HEK293 (cell line): ENCODE measurements at regions of chr18 and their contacts with region 1.

Region 1: DNA sequence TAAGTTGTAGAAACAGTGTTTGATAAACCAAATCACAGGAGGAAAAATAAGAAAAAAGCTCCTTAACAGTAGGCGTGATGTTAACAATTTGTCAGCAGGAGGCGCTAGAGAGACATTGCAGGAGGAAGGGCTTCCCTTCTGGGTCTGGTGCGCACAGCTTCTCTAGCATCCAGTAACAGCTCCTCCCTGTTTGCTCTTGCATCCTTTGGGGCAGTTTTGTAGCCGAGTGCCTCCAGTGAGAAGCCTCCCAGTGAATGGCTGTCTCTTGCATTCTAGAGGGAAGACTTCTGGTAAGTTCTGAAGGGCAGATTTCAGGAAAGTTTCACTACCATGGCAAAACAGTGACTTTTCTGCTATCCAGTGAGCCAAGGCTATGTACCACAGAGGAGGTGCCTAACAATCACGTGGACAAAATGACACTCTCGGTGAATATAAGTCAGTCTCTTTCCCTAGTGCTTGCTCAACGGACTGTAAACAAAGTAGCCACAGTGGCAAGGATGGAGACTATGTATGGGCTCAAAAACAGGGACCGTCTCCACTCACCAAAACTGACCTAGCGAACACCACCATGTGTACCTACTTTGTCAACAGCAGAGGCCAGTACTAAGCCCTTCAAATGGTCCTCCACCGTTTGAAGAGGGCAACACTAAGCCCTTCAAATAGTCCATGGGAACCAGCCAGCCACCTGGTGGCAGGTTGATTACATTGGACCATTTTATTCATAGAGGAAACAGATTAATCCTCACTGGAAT is 9.6 kb upstream of the ZNF396 start:
- H3K4me3 ChIP-seq: no peak overlapping the region
- H3K27ac ChIP-seq: no peak overlapping the region
- H3K4me1 ChIP-seq: no peaks in the 10 kb centered on the region
- CTCF ChIP-seq: peak; percentile 31

Region 2: GRCh38 chr18:35397976-35398375 is 11.2 kb after region 1 on chr18:
- CTCF ChIA-PET with region 1: interaction called, 55 read pairs
- POLR2A ChIA-PET with region 1: no interaction called
- H3K4me3 ChIP-seq: no peak overlapping the region
- H3K27ac ChIP-seq: no peak overlapping the region
- H3K4me1 ChIP-seq: no peaks in the 10 kb centered on the region
- CTCF ChIP-seq: no peak

Region 3: GRCh38 chr18:35443434-35443833 is 56.7 kb after region 1 on chr18:
- CTCF ChIA-PET with region 1: no interaction called
- POLR2A ChIA-PET with region 1: no interaction called
- H3K4me3 ChIP-seq: no peak overlapping the region
- H3K27ac ChIP-seq: no peak overlapping the region
- H3K4me1 ChIP-seq: no peaks in the 10 kb centered on the region
- CTCF ChIP-seq: no peak